Activated CD4-positive, alpha-beta memory T cell treated with anti-CD3 and anti-CD28 coated beads, Interleukin-2, amount 10 ng/mL, durations not matched to agents 7 days and 5 days (primary cell): ENCODE measurements at regions of chr10 and their contacts with region 1.

Region 1: GRCh38 chr10:97849687-97850402 is at the start of gene GOLGA7B:
- DNase-seq: peak; percentile 79
- H3K4me3 Mint-ChIP-seq: peak within 1 kb of the TSS; percentile 87
- H3K27ac Mint-ChIP-seq: peak within 1 kb of the TSS; percentile 76
- H3K4me1 Mint-ChIP-seq: peaks cover 44% of the 10 kb centered on the region
- H3K27me3 Mint-ChIP-seq: no peaks in the 10 kb centered on the region
- total RNA-seq, gene GOLGA7B: 10.5 to 11.2 TPM

Region 2: GRCh38 chr10:97792141-97792721 is 57.6 kb before region 1 on chr10:
- CTCF ChIA-PET with region 1: interaction called, 17 read pairs
- POLR2A ChIA-PET with region 1: interaction called, 8 read pairs
- DNase-seq: peak; percentile 78
- H3K4me3 Mint-ChIP-seq: no peak overlapping the region
- H3K27ac Mint-ChIP-seq: peak overlapping the region; percentile 24
- H3K4me1 Mint-ChIP-seq: peaks cover 33% of the 10 kb centered on the region
- H3K27me3 Mint-ChIP-seq: peaks cover 12% of the 10 kb centered on the region

Region 3: DNA sequence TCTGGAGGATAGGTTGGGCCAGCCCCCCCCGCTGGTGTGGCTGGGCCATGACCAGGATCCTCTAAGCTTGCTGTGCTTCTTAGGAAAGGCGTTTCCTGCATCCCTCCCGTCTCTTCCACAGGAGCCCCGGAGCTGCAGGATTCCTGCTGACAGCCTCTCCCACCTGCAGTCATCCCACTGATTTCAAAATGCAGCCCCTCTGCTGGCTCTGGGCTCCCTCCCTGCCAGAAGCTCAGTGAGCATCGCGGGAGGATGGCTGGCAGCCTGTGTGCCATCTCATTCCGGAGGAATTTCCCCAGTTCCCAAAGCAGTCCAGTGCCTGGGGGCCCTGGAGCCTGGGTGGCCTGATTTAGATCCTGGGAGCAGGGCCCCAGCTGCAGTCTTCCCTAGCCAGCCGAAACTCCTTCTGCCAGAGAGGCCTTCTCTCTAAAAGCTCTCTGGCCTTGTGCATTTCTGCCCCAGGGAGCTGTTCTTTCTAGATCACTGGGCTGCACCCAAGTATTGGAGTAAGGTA is 22.0 kb before region 1 on chr10:
- CTCF ChIA-PET with region 1: interaction called, 5 read pairs
- POLR2A ChIA-PET with region 1: interaction called, 12 read pairs
- DNase-seq: no peak
- H3K4me3 Mint-ChIP-seq: no peak overlapping the region
- H3K27ac Mint-ChIP-seq: peak overlapping the region; percentile 45
- H3K4me1 Mint-ChIP-seq: peaks cover 34% of the 10 kb centered on the region
- H3K27me3 Mint-ChIP-seq: peaks cover 3% of the 10 kb centered on the region

Region 4: GRCh38 chr10:97861097-97861750 is 11.4 kb after region 1 on chr10:
- CTCF ChIA-PET with region 1: interaction called, 14 read pairs
- POLR2A ChIA-PET with region 1: interaction called, 17 read pairs
- DNase-seq: no peak
- H3K4me3 Mint-ChIP-seq: no peak overlapping the region
- H3K27ac Mint-ChIP-seq: no peak overlapping the region
- H3K4me1 Mint-ChIP-seq: peaks cover 37% of the 10 kb centered on the region
- H3K27me3 Mint-ChIP-seq: no peaks in the 10 kb centered on the region

Region 5: GRCh38 chr10:97869091-97870042 is 19.5 kb after region 1 on chr10:
- CTCF ChIA-PET with region 1: interaction called, 16 read pairs
- POLR2A ChIA-PET with region 1: interaction called, 17 read pairs
- DNase-seq: peak; percentile 93
- H3K4me3 Mint-ChIP-seq: no peak overlapping the region
- H3K27ac Mint-ChIP-seq: peak overlapping the region; percentile 17
- H3K4me1 Mint-ChIP-seq: peaks cover 13% of the 10 kb centered on the region
- H3K27me3 Mint-ChIP-seq: peaks cover 19% of the 10 kb centered on the region